CD14-positive monocyte (primary cell): ENCODE measurements at regions of chr12 and their contacts with region 1.

Region 1: GRCh38 chr12:2794736-2795289 is at the start of gene FKBP4:
- DNase-seq: peak; percentile 61 to 66 (median 63)
- H3K4me3 ChIP-seq: peak within 1 kb of the TSS; percentile 74 to 95 (median 86)
- H3K4me3 Mint-ChIP-seq: peak within 1 kb of the TSS; percentile 98 to 99
- H3K27ac ChIP-seq: peak within 1 kb of the TSS in 1 of 2 donors; percentile 36
- H3K27ac Mint-ChIP-seq: peak within 1 kb of the TSS in 1 of 7 donors; percentile 74
- H3K4me1 ChIP-seq: peaks cover 15 to 28% of the 10 kb centered on the region in 2 donors
- H3K4me1 Mint-ChIP-seq: peaks cover 22% of the 10 kb centered on the region
- H3K27me3 ChIP-seq: peaks cover 8 to 22% of the 10 kb centered on the region in 2 donors
- H3K27me3 Mint-ChIP-seq: peaks cover 18 to 27% (median 19%) of the 10 kb centered on the region in 3 donors
- CTCF ChIP-seq: no peak
- polyA plus RNA-seq, gene FKBP4: 19.3 to 22.1 (median 20.1) TPM

Region 2: GRCh38 chr12:2812290-2813213 is 17.7 kb after region 1 on chr12 and contains the start of gene ITFG2:
- intact Hi-C with region 1: loop called in 1 of 2 experiments (anchors 2 kb)
- DNase-seq: peak; percentile 95 to 97 (median 96)
- H3K4me3 ChIP-seq: peak within 1 kb of the TSS; percentile 41 to 81 (median 57)
- H3K4me3 Mint-ChIP-seq: peak within 1 kb of the TSS; percentile 96 to 99
- H3K27ac ChIP-seq: peak within 1 kb of the TSS; percentile 83 to 93
- H3K27ac Mint-ChIP-seq: peak within 1 kb of the TSS; percentile 99 to 100 (median 100)
- H3K4me1 ChIP-seq: peaks cover 13 to 19% of the 10 kb centered on the region in 2 donors
- H3K4me1 Mint-ChIP-seq: peaks cover 18% of the 10 kb centered on the region
- H3K27me3 ChIP-seq: no peaks in the 10 kb centered on the region
- H3K27me3 Mint-ChIP-seq: no peaks in the 10 kb centered on the region
- CTCF ChIP-seq: no peak
- polyA plus RNA-seq, gene ITFG2: 19.1 to 51.2 (median 24.0) TPM

Region 3: GRCh38 chr12:2858944-2859421 is 64.2 kb after region 1 on chr12:
- intact Hi-C with region 1: no loop called
- DNase-seq: no peak
- H3K4me3 ChIP-seq: no peak overlapping the region
- H3K4me3 Mint-ChIP-seq: no peak overlapping the region
- H3K27ac ChIP-seq: no peak overlapping the region
- H3K27ac Mint-ChIP-seq: peak overlapping the region in 5 of 7 donors; percentile 18 to 60 (median 53)
- H3K4me1 ChIP-seq: no peaks in the 10 kb centered on the region
- H3K4me1 Mint-ChIP-seq: no peaks in the 10 kb centered on the region
- H3K27me3 ChIP-seq: no peaks in the 10 kb centered on the region
- H3K27me3 Mint-ChIP-seq: peaks cover 0 to 2% (median 0%) of the 10 kb centered on the region in 3 donors
- CTCF ChIP-seq: no peak